ENCODE measurements at regions of chr13 and their contacts with region 1.

Region 1: DNA sequence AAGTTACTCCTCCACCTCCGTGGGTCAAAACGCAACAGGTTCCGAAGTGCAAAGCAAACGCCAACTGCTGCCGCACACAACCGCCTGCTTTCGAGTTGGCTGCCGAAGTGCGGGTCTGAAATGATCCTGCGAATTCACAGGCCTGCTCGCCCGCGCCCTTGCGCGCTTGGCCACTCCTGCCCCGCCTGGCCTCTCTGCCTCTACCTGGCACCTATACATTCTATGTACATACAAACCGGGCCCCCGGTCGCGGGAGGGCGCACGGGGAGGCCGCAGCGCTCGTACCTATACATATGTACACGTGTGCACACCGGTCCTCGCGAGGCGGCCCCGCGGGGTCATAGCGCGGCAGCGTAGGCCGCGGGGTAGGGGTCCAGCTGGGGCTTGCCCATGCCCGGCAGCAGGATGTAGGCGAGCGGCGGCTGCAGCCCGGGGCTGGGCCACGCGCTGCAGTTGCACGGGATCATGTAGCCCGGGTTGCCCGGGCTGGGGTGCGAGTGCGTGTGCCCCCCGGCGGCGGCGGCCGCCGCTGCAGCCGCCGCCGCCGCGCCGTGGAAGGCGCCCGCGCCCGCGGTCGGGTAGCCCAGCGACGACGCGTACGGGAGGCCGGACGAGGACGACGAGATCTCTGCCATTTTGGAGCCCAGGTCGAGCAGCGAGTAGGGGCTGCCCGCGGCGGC is 1.3 kb downstream of the SOX21 start:
- DNase-seq: no peak
- H3K4me3 Mint-ChIP-seq: no peak overlapping the region
- H3K27ac Mint-ChIP-seq: peak overlapping the region; percentile 73
- H3K4me1 Mint-ChIP-seq: peaks cover 10% of the 10 kb centered on the region
- H3K27me3 Mint-ChIP-seq: peaks cover 73% of the 10 kb centered on the region

Region 2: DNA sequence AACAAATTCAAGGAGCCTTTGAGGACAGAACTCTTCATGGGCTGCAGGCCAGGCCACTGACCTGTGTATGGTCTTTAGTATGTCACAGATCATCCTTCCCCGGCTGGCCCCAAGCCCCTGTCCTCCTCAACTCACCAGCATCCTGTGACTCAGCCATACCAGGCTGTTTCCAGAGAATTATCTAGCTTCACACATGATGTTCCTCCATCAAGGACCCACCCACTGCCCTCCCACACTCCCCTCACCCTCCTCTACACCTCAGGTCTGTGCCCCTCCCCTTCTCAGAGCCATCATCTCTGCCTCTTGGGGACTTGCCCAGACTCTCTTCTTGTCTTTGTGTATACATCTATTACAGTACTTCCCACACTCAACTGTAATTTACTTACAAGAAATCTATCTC is 246.2 kb before region 1 on chr13:
- intact Hi-C with region 1: no loop called
- DNase-seq: no peak
- H3K4me3 Mint-ChIP-seq: no peak overlapping the region
- H3K27ac Mint-ChIP-seq: no peak overlapping the region
- H3K4me1 Mint-ChIP-seq: no peaks in the 10 kb centered on the region
- H3K27me3 Mint-ChIP-seq: no peaks in the 10 kb centered on the region

Region 3: DNA sequence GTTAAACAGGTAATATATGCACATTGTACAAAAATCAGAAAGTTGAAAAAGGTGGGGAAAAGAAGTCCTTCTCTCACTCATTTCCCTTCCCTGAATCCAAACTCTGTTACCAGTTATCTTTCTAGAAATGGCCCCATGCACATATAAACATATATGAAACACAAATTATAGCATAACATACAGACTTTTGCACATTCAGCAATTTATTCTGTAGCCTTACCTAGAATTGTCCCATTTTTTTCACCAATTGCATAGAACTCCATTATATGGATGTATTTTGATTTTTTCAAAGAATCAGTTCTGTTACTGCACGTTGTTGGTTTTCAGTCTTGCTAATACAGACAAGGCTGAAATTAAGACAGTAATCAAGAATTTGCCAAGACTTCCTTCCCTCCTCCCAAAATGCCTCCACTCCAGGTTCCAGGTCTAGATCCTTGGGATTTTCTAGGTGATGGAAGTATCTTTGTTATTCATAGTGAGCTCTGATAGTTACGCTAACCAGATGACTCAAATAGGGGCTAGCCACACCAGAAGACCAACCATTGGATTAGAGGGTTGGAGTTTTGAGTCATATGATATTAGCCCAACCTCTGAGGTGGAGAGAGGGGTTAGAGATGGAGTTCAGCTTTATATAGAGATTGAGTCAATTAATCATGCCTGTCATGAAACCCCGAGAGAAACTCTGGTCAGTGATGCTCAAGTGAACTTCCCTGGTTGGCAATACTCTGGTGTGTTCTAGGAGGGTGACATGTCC is 78.6 kb before region 1 on chr13:
- intact Hi-C with region 1: no loop called
- DNase-seq: no peak
- H3K4me3 Mint-ChIP-seq: no peak overlapping the region
- H3K27ac Mint-ChIP-seq: no peak overlapping the region
- H3K4me1 Mint-ChIP-seq: no peaks in the 10 kb centered on the region
- H3K27me3 Mint-ChIP-seq: no peaks in the 10 kb centered on the region

Region 4: DNA sequence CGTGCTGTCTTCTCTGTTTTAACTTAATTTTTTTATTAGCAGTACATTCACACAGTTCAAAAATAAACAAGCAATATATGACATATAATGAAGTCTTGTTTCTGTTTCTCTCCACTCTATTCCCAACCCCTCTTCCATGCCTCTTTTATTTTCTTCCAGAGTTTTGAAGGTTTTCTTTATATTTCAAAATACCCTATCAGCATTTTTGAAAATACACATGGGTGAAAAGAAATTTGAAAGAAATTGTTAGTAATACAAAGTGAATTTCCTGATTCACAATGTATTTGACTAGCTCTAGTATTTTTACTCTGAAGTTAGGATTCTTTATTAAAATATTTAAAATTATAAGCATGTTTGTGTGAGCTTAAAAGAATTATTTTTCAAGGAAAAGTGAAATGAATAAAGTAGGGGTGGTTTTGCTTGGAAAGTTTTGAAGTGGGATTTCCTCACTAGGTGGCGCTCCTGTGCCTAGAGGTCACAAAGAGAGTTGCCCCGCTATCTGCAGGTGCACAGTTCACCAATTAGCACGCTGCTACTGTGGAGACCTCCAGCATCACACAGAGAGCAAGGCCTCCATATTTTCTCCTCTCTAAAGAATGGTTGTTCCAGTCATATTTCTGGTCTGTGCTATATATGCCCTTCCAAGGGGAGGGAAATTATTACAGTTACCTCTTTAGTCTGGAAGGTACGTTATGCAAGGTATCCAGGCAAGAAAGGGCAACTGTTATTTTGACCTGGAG is 36.2 kb before region 1 on chr13:
- intact Hi-C with region 1: loop called (anchors 2 kb)
- DNase-seq: no peak
- H3K4me3 Mint-ChIP-seq: no peak overlapping the region
- H3K27ac Mint-ChIP-seq: no peak overlapping the region
- H3K4me1 Mint-ChIP-seq: no peaks in the 10 kb centered on the region
- H3K27me3 Mint-ChIP-seq: peaks cover 19% of the 10 kb centered on the region

Region 5: DNA sequence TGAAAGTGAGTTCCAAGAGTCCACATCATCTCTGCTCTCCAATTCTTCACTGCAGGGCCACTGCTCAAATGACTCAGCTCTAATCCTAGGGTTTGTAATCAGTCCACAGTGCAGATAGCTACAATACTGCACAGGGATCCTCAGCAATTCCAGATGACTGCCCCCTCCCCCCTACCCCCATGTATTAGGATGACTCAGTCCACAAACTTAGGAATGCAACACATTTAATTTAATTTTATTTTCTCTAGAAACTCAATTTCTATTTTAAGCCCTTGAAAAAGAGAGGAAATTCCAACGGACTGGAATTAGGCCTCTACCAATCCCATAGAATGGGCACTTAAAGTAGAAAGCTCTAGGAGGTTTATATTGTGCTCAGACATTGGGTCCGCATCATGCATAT is 175.2 kb after region 1 on chr13:
- intact Hi-C with region 1: no loop called
- DNase-seq: no peak
- H3K4me3 Mint-ChIP-seq: no peak overlapping the region
- H3K27ac Mint-ChIP-seq: no peak overlapping the region
- H3K4me1 Mint-ChIP-seq: no peaks in the 10 kb centered on the region
- H3K27me3 Mint-ChIP-seq: peaks cover 2% of the 10 kb centered on the region

Region 6: DNA sequence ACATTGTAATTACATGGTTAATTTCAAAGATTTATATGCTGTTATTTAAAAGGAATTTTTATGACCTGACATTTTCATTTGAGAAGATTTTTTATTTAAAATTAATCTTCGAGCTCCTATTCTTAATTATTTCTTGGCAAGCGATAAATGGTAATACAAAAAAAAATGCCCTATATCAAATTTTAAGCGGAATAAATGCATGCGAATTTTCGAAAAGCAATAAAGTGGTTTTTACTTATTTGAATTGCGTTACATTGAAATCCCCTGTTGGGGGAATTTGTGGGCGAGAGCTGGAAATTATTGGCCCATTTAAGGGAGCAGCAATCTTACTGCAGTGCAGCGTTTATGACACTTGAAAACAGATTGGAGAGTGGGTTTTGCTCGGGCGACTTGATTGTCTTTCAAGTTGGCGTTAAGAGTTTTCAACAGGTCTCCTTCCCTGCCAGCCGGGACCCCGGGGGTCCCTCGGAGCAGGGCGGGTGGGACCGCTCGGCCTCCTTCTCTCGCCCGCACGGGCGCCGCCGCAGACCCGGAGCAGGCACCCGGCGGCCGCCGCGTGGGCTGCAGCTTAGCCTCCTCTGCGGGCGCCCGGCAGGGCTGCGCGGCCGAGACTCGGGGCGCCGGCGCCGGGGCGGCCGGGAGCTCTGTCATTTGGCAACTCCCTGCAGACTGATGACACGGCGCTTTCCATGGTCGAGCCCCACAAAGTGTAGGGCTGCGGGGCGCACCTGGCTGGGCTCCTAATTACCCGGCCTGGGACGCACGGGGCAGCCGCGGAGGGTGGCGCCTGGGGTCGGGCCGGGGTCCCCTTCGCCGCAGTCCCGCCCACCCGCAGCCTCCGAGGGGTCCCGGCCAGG is 256.4 kb after region 1 on chr13:
- intact Hi-C with region 1: loop called (anchors 2 kb)
- DNase-seq: no peak
- H3K4me3 Mint-ChIP-seq: no peak overlapping the region
- H3K27ac Mint-ChIP-seq: no peak overlapping the region
- H3K4me1 Mint-ChIP-seq: peaks cover 7% of the 10 kb centered on the region
- H3K27me3 Mint-ChIP-seq: peaks cover 46% of the 10 kb centered on the region

Region 7: GRCh38 chr13:95552539-95553441 is 841.8 kb after region 1 on chr13 and contains the start of gene CLDN10:
- intact Hi-C with region 1: loop called (anchors 10 kb)
- DNase-seq: no peak
- H3K4me3 Mint-ChIP-seq: peak within 1 kb of the TSS; percentile 47
- H3K27ac Mint-ChIP-seq: no peak within 1 kb of the TSS
- H3K4me1 Mint-ChIP-seq: peaks cover 11% of the 10 kb centered on the region
- H3K27me3 Mint-ChIP-seq: peaks cover 50% of the 10 kb centered on the region
- total RNA-seq, gene CLDN10: not detected in 2 replicates

Region 8: DNA sequence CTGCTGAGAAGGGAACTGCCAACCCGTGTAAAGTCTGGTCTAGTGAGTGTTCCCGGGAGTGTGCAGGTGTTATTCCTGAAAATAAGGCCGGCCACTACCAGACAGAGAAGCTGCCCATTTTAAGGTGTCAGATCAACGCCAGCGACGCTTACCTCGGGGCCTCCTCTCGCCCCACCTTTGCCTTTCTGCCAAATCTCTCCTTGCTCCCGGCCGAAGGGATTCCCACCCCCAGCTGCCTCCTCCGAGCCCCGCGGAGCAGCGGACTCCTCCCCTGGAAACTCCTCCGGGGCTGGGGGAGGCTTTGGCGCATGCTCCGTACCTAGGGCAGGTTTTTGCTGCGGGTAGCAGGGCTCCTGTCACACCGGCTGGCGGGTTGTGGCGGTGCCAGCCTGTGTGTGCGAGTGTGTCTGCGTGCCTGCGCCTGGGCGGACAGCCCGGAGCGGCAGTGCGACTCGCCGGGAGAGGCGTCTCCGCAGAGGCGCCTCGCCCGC is 1378.8 kb after region 1 on chr13 and contains the start of gene HS6ST3:
- intact Hi-C with region 1: loop called (anchors 5 kb)
- DNase-seq: no peak
- H3K4me3 Mint-ChIP-seq: no peak within 1 kb of the TSS
- H3K27ac Mint-ChIP-seq: no peak within 1 kb of the TSS
- H3K4me1 Mint-ChIP-seq: no peaks in the 10 kb centered on the region
- H3K27me3 Mint-ChIP-seq: peaks cover 39% of the 10 kb centered on the region
- total RNA-seq, gene HS6ST3: not detected in 2 replicates